ENCODE measurements at regions of chr3 and their contacts with region 1.

Region 1: DNA sequence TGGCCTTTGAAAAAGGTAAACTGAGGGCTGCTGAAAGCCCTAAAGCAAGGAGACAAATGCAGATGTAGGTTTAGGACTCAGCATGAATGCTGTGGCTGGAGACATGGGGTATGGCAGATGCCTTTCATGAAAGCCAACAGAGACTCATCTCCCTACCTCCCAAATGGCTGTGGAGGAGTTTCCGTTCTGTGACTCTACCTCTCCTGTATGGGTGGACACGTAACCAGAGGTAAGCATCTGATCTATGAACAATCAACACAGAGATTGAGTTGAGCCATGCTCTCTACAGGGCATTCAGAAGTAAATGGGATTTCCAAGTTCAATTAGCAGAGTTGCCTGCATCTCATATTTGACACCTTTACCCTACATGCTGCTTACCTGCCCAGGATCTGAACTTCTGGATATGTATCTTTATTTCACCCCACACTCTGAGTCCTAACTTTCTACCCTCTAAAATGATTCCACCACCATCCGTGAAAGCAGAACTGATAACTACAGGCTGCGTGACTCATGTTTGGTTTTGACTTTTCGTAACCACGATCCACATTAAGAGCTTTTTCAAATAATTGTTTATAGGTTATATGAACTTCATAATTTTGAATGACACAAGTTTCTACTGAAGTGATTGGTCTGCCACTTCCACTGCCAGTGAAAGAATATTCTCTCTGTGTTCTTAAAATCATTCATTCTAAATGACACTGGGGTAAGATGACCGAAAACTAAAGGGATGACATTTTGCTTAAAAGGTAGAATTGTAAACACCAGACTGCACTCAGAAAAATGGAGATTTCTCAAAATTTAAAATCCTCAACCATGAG is 1058.7 kb downstream of the FHIT start:
- DNase-seq: no peak
- H3K4me3 Mint-ChIP-seq: peak overlapping the region; percentile 62
- H3K27ac Mint-ChIP-seq: peak overlapping the region; percentile 94
- H3K4me1 Mint-ChIP-seq: peaks cover 58% of the 10 kb centered on the region
- H3K27me3 Mint-ChIP-seq: no peaks in the 10 kb centered on the region

Region 2: DNA sequence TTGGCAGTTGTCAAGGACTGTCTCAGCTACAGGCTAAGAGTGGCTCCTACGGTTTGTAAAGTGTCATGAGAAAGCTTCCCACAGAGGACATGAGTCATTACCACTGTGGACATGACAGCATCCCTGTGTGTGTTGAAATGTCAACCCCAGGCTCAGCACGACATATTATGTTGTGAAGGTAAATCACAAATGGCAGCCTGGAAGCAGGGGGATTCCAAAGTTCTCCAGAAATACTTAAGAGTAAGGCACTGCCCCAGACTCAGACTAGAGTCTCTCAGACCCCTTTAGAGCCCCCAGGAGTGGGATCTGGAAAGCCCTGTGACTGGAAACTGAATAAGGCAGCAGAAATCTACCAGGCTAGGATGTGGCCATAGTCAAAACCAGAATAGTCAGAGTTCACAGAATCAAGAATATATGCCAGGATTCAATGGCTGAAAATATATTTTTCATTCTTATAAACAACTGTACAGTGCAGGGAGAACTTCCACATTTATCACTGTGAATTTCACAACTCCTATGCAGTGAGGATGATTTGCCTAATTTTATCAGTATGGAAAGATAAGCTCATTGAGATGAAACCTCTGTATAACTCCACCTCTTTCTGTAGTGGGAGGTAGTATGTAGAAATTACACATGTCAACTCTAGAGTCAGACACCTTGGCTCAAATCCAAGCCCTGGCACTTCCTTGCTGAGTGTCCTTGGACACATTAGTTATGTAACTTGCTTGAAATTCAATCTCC is 905.5 kb before region 1 on chr3:
- intact Hi-C with region 1: loop called (anchors 1 kb)
- DNase-seq: peak; percentile 29
- H3K4me3 Mint-ChIP-seq: peak overlapping the region; percentile 1
- H3K27ac Mint-ChIP-seq: peak overlapping the region; percentile 91
- H3K4me1 Mint-ChIP-seq: peaks cover 37% of the 10 kb centered on the region
- H3K27me3 Mint-ChIP-seq: no peaks in the 10 kb centered on the region

Region 3: GRCh38 chr3:59913645-59914044 is 278.9 kb before region 1 on chr3:
- intact Hi-C with region 1: no loop called
- DNase-seq: no peak
- H3K4me3 Mint-ChIP-seq: no peak overlapping the region
- H3K27ac Mint-ChIP-seq: no peak overlapping the region
- H3K4me1 Mint-ChIP-seq: peaks cover 12% of the 10 kb centered on the region
- H3K27me3 Mint-ChIP-seq: no peaks in the 10 kb centered on the region

Region 4: GRCh38 chr3:59935025-59935424 is 257.5 kb before region 1 on chr3:
- intact Hi-C with region 1: loop called (anchors 1 kb)
- DNase-seq: peak; percentile 6
- H3K4me3 Mint-ChIP-seq: peak overlapping the region; percentile 54
- H3K27ac Mint-ChIP-seq: peak overlapping the region; percentile 82
- H3K4me1 Mint-ChIP-seq: peaks cover 43% of the 10 kb centered on the region
- H3K27me3 Mint-ChIP-seq: no peaks in the 10 kb centered on the region

Region 5: GRCh38 chr3:60010781-60011180 is 181.7 kb before region 1 on chr3:
- intact Hi-C with region 1: loop called (anchors 2 kb)
- DNase-seq: peak; percentile 73
- H3K4me3 Mint-ChIP-seq: peak overlapping the region; percentile 74
- H3K27ac Mint-ChIP-seq: peak overlapping the region; percentile 91
- H3K4me1 Mint-ChIP-seq: peaks cover 76% of the 10 kb centered on the region
- H3K27me3 Mint-ChIP-seq: peaks cover 2% of the 10 kb centered on the region

Region 6: GRCh38 chr3:60228823-60229222 is 36.3 kb after region 1 on chr3:
- intact Hi-C with region 1: loop called (anchors 2 kb)
- DNase-seq: no peak
- H3K4me3 Mint-ChIP-seq: no peak overlapping the region
- H3K27ac Mint-ChIP-seq: no peak overlapping the region
- H3K4me1 Mint-ChIP-seq: no peaks in the 10 kb centered on the region
- H3K27me3 Mint-ChIP-seq: no peaks in the 10 kb centered on the region

Region 7: GRCh38 chr3:60555684-60556354 is 363.3 kb after region 1 on chr3:
- intact Hi-C with region 1: loop called (anchors 1 kb)
- DNase-seq: no peak
- H3K4me3 Mint-ChIP-seq: no peak overlapping the region
- H3K27ac Mint-ChIP-seq: peak overlapping the region; percentile 0
- H3K4me1 Mint-ChIP-seq: peaks cover 38% of the 10 kb centered on the region
- H3K27me3 Mint-ChIP-seq: peaks cover 2% of the 10 kb centered on the region

Region 8: DNA sequence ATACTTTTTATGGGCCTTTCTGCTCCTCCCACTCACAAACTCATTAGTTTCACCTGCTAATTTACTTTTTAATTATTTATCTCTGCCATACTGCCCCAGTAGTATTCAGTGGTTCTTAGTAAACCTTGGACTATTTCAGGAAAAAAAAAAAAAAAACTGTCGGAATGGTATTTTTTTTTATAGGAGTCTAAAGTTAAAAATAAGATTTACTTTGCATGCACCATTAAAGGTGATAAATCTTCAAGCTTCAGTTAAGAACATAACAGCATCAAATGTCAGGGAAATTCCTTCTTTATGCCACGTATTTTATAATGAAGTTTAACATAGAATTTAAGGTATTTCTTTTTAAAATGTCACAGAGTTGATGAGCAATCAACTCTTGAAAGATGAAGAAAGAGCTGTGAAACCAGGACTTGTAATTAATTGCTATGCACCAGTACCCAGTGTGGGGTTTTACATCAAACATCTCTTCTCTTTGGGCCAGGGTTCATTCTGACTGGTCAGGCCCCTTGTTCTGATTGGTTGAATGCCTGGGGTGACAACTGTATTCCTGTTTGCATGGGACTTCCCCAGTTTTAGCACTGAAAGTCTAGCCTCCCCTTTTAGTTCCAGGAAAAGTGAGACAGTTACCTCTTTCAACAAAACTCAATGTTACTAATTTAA is 1328.6 kb after region 1 on chr3:
- intact Hi-C with region 1: loop called (anchors 1 kb)
- DNase-seq: peak; percentile 61
- H3K4me3 Mint-ChIP-seq: peak overlapping the region; percentile 57
- H3K27ac Mint-ChIP-seq: peak overlapping the region; percentile 78
- H3K4me1 Mint-ChIP-seq: peaks cover 57% of the 10 kb centered on the region
- H3K27me3 Mint-ChIP-seq: no peaks in the 10 kb centered on the region

Measured in activated T-helper 1 cell treated with anti-CD3 and anti-CD28 coated beads, Interleukin-12 subunit alpha, Interleukin-12 subunit beta, Interleukin-2, Interleukin-4 antibody, amounts not matched to agents 30 ng/mL and 10 ng/mL and 1 ng/mL, durations not matched to agents 14 hours and 24 hours and 36 hours (primary cell).